ENCODE measurements at regions of chr1 and their contacts with region 1.

Region 1: DNA sequence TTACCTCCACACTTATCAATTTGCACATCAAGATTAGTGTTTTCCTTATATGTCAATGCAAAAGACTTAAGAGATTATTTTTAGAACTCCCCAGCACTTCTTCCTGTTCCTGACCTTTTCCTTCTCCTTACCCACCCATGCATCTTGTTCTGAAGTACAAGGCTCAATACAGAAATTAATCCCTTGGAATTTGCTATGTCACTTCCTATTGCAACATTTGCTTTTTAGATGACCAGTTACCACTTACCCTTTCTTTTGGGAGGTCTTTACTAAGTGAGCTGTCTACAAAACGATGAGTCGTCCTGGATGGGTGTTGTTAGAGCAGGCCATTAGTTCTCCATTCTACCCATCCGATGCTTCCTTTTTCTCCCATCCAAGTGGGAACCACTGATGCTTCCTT is 221.2 kb downstream of the FMN2 start:
- DNase-seq: peak; percentile 94
- ATAC-seq: peak; percentile 58
- H3K4me3 ChIP-seq: no peak overlapping the region
- H3K27ac ChIP-seq: 0 out of 2 replicates have a peak overlapping the region, but pooled peaks have one; percentile 23
- H3K4me1 ChIP-seq: peaks cover 18% of the 10 kb centered on the region
- H3K27me3 ChIP-seq: no peaks in the 10 kb centered on the region
- CTCF ChIP-seq: no peak
- POLR2A ChIP-seq: no peak
- RAD21 ChIP-seq: no peak

Region 2: DNA sequence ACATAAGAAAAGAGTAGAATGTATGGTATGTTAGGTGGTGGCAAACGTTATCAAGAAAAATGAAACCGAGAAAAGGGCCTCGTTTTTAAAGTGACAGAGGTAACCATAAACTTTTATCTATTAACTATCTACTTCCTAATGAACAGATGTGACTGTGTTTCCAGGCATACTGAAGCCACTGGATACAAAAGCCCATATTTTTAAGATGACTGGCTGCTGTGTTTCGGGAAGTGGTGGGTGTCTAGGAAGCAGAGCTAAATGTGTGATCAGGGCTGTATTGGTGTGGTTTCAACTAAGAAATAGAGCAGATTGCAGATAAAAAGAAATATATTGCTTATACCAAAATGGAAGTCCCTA is 854.8 kb before region 1 on chr1:
- CTCF ChIA-PET with region 1: no interaction called
- POLR2A ChIA-PET with region 1: no interaction called
- dilution Hi-C with region 1: no loop called
- in situ Hi-C with region 1: no loop called
- intact Hi-C with region 1: no loop called
- DNase-seq: no peak
- ATAC-seq: no peak
- H3K4me3 ChIP-seq: no peak overlapping the region
- H3K27ac ChIP-seq: no peak overlapping the region
- H3K4me1 ChIP-seq: no peaks in the 10 kb centered on the region
- H3K27me3 ChIP-seq: no peaks in the 10 kb centered on the region
- CTCF ChIP-seq: no peak
- POLR2A ChIP-seq: no peak
- RAD21 ChIP-seq: no peak

Region 3: DNA sequence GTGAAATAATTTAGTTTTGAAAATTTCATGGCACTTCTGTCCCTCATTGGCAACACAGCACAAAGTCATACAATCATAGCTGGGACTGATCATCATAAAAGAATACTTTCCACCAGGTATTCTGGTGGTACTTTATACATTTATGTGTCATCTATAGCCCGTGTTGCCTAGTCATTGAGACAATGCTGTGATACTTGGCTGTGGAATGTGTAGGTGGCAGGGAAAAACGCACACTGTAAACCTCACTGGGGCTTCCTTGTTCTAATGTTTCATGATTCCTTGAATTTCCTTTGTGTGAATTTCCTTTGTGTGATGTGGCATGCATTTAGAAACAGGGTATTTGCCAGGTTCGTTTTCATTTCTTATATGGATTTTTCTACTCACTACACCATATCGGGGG is 102.8 kb before region 1 on chr1:
- CTCF ChIA-PET with region 1: no interaction called
- POLR2A ChIA-PET with region 1: no interaction called
- dilution Hi-C with region 1: no loop called
- in situ Hi-C with region 1: no loop called
- intact Hi-C with region 1: no loop called
- DNase-seq: peak; percentile 71
- ATAC-seq: no peak
- H3K4me3 ChIP-seq: no peak overlapping the region
- H3K27ac ChIP-seq: no peak overlapping the region
- H3K4me1 ChIP-seq: peaks cover 16% of the 10 kb centered on the region
- H3K27me3 ChIP-seq: no peaks in the 10 kb centered on the region
- CTCF ChIP-seq: no peak
- POLR2A ChIP-seq: no peak
- RAD21 ChIP-seq: no peak

Region 4: DNA sequence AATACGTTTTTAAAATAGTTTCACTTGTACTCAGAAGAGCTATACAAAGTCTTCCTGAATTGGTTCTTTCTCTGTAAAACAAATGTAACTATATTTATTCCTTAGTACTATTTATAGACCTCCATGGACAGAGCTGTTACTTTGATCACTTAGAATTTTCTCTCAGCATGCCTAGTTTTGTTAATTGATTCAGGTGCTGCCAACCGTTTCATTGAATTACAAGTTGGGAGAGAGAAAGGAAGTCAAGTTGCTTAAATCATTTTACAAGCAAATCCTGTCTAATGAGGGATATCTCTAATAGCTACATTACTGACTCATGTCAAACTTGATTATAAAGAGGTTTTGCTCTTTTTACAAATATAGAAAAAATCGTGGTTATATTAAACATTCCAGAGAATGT is 19.8 kb after region 1 on chr1:
- CTCF ChIA-PET with region 1: interaction called, 6 read pairs
- POLR2A ChIA-PET with region 1: no interaction called
- dilution Hi-C with region 1: no loop called
- in situ Hi-C with region 1: no loop called
- intact Hi-C with region 1: loop called (anchors 2 kb)
- DNase-seq: no peak
- ATAC-seq: no peak
- H3K4me3 ChIP-seq: no peak overlapping the region
- H3K27ac ChIP-seq: no peak overlapping the region
- H3K4me1 ChIP-seq: peaks cover 1% of the 10 kb centered on the region; the same call in 1 of the 2 replicates
- H3K27me3 ChIP-seq: no peaks in the 10 kb centered on the region
- CTCF ChIP-seq: no peak
- POLR2A ChIP-seq: no peak
- RAD21 ChIP-seq: no peak

Region 5: GRCh38 chr1:240350910-240351331 is 38.0 kb after region 1 on chr1:
- CTCF ChIA-PET with region 1: no interaction called
- POLR2A ChIA-PET with region 1: no interaction called
- dilution Hi-C with region 1: no loop called
- in situ Hi-C with region 1: no loop called
- intact Hi-C with region 1: loop called (anchors 5 kb)
- DNase-seq: peak; percentile 96
- ATAC-seq: peak; percentile 87
- H3K4me3 ChIP-seq: no peak overlapping the region
- H3K27ac ChIP-seq: no peak overlapping the region
- H3K4me1 ChIP-seq: peaks cover 17% of the 10 kb centered on the region
- H3K27me3 ChIP-seq: no peaks in the 10 kb centered on the region
- CTCF ChIP-seq: no peak
- POLR2A ChIP-seq: no peak
- RAD21 ChIP-seq: peak; percentile 23; the same call in 1 of the 2 replicates